ENCODE measurements at regions of chr17 and their contacts with region 1.

Region 1: DNA sequence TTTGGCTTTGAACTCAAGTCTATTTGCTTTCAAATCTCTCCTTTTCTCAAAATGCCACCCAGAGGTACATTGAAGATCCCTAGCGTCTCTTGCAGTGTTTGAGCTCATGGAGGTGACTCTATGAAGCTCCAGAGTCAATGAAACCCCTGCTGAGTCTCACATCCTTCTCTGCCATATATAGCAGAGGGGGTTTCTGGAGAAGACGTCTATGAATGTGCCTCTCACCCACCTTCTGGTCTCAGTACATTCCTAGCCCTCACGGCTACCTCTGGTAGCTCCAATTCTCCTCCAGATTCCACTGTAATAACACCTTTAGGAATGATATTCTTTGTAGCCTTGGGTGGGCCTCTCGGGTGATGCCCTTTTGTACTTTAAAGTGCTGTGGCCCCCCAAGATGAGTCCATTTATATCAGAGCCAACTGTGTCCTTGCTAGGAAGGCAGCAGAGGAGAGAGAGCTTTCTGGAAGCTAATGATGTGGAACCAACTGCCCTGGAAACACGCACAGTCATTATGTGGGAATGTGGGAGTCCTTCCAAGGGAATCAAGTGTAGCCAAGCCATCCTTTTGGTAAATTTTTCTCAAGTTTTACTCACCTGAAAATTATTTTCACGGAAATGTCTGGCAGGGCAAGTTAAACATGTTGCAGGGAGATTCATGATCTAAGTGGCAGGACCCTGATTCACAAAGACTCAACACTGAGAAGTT is 123.4 kb downstream of the ASIC2 start:
- DNase-seq: no peak
- ATAC-seq: no peak
- H3K4me3 ChIP-seq: no peak overlapping the region
- H3K27ac ChIP-seq: peak overlapping the region in 1 of 2 donors; percentile 5
- H3K4me1 ChIP-seq: peaks cover 0 to 14% of the 10 kb centered on the region in 2 donors
- H3K27me3 ChIP-seq: no peaks in the 10 kb centered on the region

Region 2: DNA sequence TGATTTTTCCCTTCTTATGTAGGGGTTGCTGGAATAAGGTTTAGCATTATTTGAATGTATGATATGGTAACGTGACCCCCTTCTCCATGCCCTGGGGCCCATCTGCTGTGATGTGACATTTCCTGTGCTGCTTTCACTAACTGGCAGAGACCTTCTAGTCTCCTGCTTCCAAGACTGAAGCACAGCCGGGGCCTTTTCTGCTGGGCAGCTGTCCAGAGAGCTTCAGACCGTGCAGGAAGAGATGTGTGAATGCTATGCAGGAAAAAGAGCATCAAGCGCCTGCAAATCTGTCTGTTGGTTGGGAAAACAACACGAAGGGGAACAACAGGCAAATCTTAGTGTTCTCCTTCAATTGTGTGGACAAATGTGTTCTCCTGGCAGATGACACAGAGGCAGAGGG is 49.6 kb before region 1 on chr17:
- intact Hi-C with region 1: loop called in 1 of 2 experiments (anchors 5 kb)
- DNase-seq: no peak
- ATAC-seq: no peak
- H3K4me3 ChIP-seq: no peak overlapping the region
- H3K27ac ChIP-seq: no peak overlapping the region
- H3K4me1 ChIP-seq: no peaks in the 10 kb centered on the region
- H3K27me3 ChIP-seq: no peaks in the 10 kb centered on the region

Region 3: GRCh38 chr17:33218657-33219601 is 49.2 kb after region 1 on chr17:
- intact Hi-C with region 1: loop called in 1 of 2 experiments (anchors 5 kb)
- DNase-seq: no peak
- ATAC-seq: peak; percentile 37
- H3K4me3 ChIP-seq: no peak overlapping the region
- H3K27ac ChIP-seq: peak overlapping the region; percentile 52 to 91
- H3K4me1 ChIP-seq: peaks cover 0 to 2% of the 10 kb centered on the region in 2 donors
- H3K27me3 ChIP-seq: no peaks in the 10 kb centered on the region

Region 4: DNA sequence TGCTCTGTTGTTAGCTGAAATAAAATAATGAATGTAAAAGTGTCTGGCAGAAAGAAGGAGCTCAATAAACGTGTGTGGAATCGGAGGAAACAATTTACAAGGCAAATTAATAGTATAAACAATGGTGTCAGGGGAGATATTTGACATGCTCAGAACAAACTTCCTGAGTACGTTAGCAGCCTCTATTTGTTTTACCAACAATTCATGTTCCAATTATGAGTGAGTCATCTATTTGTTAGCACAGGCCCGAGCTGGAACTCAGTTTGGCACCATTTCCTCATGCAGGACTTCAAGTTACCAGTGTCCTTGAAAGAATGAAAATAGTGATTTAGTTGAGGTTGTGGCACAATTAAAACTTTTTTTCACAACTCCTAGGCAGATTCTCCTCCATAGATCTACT is 114.3 kb after region 1 on chr17:
- intact Hi-C with region 1: loop called in 1 of 2 experiments (anchors 10 kb)
- DNase-seq: peak in 1 of 2 donors; percentile 62
- ATAC-seq: peak; percentile 68
- H3K4me3 ChIP-seq: no peak overlapping the region
- H3K27ac ChIP-seq: no peak overlapping the region
- H3K4me1 ChIP-seq: peaks cover 0 to 6% of the 10 kb centered on the region in 2 donors
- H3K27me3 ChIP-seq: no peaks in the 10 kb centered on the region